Esophagus squamous epithelium (tissue), 5 donors: ENCODE measurements at regions of chr10 and their contacts with region 1.

Region 1: GRCh38 chr10:92517034-92517655 is 56.7 kb downstream of the IDE start:
- DNase-seq: no peak
- H3K4me3 ChIP-seq: no peak overlapping the region
- H3K27ac ChIP-seq: no peak overlapping the region
- H3K4me1 ChIP-seq: no peaks in the 10 kb centered on the region
- H3K27me3 ChIP-seq: no peaks in the 10 kb centered on the region
- CTCF ChIP-seq: peak; percentile 63 to 82 (median 75)
- POLR2A ChIP-seq: no peak

Region 2: DNA sequence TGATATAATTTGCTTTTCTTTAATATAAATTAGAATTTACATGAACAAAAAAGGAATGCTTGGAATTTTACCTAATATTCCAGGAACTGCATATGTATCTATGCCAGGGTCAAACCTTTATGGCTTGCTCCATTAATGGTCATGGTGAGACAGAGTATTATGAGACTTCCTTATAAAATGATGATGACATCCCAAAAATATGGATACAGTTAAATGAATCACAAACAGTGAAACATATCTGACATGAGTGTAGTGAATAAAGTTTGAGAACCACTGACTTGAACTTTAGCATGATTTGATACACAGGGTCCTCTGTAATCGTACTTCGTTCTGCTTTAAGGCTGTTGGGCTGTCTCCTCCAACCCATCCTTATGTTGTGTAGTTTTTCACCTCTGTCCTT is 174.3 kb before region 1 on chr10:
- intact Hi-C with region 1: no loop called
- DNase-seq: no peak
- H3K4me3 ChIP-seq: no peak overlapping the region
- H3K27ac ChIP-seq: peak overlapping the region in 2 of 4 donors; percentile 11 to 12
- H3K4me1 ChIP-seq: no peaks in the 10 kb centered on the region
- H3K27me3 ChIP-seq: no peaks in the 10 kb centered on the region
- CTCF ChIP-seq: no peak
- POLR2A ChIP-seq: no peak

Region 3: GRCh38 chr10:92438220-92438619 is 78.9 kb before region 1 on chr10:
- intact Hi-C with region 1: no loop called
- DNase-seq: no peak
- H3K4me3 ChIP-seq: no peak overlapping the region
- H3K27ac ChIP-seq: no peak overlapping the region
- H3K4me1 ChIP-seq: no peaks in the 10 kb centered on the region
- H3K27me3 ChIP-seq: no peaks in the 10 kb centered on the region
- CTCF ChIP-seq: no peak
- POLR2A ChIP-seq: no peak

Region 4: GRCh38 chr10:92567952-92568600 is 50.9 kb after region 1 on chr10:
- intact Hi-C with region 1: loop called (anchors 5 kb)
- DNase-seq: no peak
- H3K4me3 ChIP-seq: no peak overlapping the region
- H3K27ac ChIP-seq: peak overlapping the region in 3 of 4 donors; percentile 38 to 70 (median 63)
- H3K4me1 ChIP-seq: peaks cover 10 to 59% (median 27%) of the 10 kb centered on the region in 3 donors
- H3K27me3 ChIP-seq: no peaks in the 10 kb centered on the region
- CTCF ChIP-seq: no peak
- POLR2A ChIP-seq: no peak

Region 5: DNA sequence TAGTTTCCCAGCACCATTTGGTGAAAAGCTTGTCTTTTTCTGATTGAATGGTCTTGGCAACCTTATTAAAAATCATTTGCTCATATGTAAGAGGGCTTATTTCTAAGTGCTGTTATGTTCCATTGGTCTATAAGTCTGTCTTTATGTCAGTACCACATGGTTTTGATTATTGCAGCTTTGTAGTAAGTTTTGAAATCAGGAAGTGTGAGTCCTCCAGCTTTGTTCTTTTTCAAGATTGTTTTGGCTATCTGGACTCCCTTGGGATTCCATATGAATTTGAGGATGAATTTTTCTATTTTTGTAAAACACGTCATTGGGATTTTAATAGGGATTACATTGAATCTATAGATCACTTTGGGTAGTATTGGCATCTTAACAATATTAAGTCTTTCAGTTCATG is 81.2 kb after region 1 on chr10:
- intact Hi-C with region 1: no loop called
- DNase-seq: no peak
- H3K4me3 ChIP-seq: no peak overlapping the region
- H3K27ac ChIP-seq: no peak overlapping the region
- H3K4me1 ChIP-seq: peaks cover 0 to 19% (median 6%) of the 10 kb centered on the region in 3 donors
- H3K27me3 ChIP-seq: no peaks in the 10 kb centered on the region
- CTCF ChIP-seq: no peak
- POLR2A ChIP-seq: no peak

Region 6: DNA sequence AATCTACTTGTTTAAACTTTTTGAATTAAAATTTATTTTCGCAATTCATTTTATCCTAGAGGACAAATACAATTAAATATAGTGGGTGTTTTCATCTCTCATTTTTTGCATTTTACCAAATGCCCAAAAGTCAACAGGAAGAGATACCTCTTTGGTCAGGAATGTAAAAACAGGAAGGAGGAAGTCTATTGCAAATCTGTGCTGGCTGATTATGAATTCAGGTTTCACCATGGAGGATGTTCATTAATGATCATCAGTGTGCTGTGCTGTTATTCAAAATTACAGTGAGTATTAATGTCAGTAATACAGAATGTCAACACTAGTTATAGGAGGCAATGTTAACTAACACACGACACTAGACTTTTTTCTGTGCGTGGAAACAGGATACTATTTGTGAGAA is 355.9 kb after region 1 on chr10:
- intact Hi-C with region 1: loop called (anchors 10 kb)
- DNase-seq: no peak
- H3K4me3 ChIP-seq: no peak overlapping the region
- H3K27ac ChIP-seq: no peak overlapping the region
- H3K4me1 ChIP-seq: peaks cover 0 to 4% (median 0%) of the 10 kb centered on the region in 3 donors
- H3K27me3 ChIP-seq: no peaks in the 10 kb centered on the region
- CTCF ChIP-seq: no peak
- POLR2A ChIP-seq: no peak